ENCODE measurements at regions of chr6 and their contacts with region 1.

Region 1: GRCh38 chr6:125956506-125957390 is at the start of gene HINT3:
- DNase-seq: peak; percentile 92 to 99
- H3K4me3 ChIP-seq: peak within 1 kb of the TSS; percentile 47 to 94 (median 90)
- H3K27ac ChIP-seq: peak within 1 kb of the TSS; percentile 12; the same call in 1 of the 2 replicates
- H3K4me1 ChIP-seq: peaks cover 0 to 9% (median 5%) of the 10 kb centered on the region in 4 experiments; a peak in 4 of 7 replicates
- H3K27me3 ChIP-seq: no peaks in the 10 kb centered on the region
- CTCF ChIP-seq: peak; percentile 86 to 99 (median 95)
- EP300 ChIP-seq: peak in 1 of 2 experiments; percentile 79; a peak in 1 of 3 replicates
- POLR2A ChIP-seq: no peak; a peak in 1 of 3 replicates
- RAD21 ChIP-seq: peak; percentile 74 to 75
- total RNA-seq, gene HINT3: 7.7 and 7.8 TPM in 2 replicates

Region 2: GRCh38 chr6:125406741-125407140 is 550.0 kb before region 1 on chr6:
- CTCF ChIA-PET with region 1: no interaction called
- POLR2A ChIA-PET with region 1: no interaction called
- DNase-seq: no peak
- H3K4me3 ChIP-seq: no peak overlapping the region
- H3K27ac ChIP-seq: no peak overlapping the region
- H3K4me1 ChIP-seq: no peaks in the 10 kb centered on the region
- H3K27me3 ChIP-seq: no peaks in the 10 kb centered on the region
- CTCF ChIP-seq: no peak
- EP300 ChIP-seq: no peak
- POLR2A ChIP-seq: no peak
- RAD21 ChIP-seq: no peak

Region 3: GRCh38 chr6:125688138-125688537 is 268.6 kb before region 1 on chr6:
- CTCF ChIA-PET with region 1: no interaction called
- POLR2A ChIA-PET with region 1: no interaction called
- DNase-seq: no peak
- H3K4me3 ChIP-seq: no peak overlapping the region
- H3K27ac ChIP-seq: no peak overlapping the region
- H3K4me1 ChIP-seq: no peaks in the 10 kb centered on the region
- H3K27me3 ChIP-seq: no peaks in the 10 kb centered on the region
- CTCF ChIP-seq: no peak
- EP300 ChIP-seq: no peak
- POLR2A ChIP-seq: no peak
- RAD21 ChIP-seq: no peak

Region 4: DNA sequence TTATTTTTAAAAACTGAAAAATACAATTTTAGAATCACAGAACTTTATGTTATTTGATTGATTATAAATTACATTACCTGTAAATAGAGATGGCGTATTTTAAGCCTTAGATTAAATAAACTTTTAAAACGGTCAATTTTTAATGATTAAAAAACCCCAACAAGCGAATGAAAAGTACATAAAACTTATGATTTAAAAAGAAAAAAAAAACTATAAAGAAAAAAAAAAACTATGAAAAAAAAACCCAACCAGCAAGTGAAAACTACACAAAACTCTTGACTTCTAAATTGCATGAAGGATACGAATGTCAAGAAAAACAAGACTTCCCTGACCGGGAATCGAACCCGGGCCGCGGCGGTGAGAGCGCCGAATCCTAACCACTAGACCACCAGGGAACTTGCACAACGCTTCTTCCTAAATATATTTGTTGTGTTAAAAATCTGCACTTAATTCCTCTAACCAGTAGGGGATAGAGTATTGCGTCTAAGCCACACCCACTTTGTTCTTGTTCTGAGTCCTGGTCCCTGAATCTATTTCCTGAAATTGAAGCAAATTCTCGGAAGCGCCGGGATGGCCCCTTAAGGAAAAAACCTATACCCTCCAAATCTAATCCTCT is 176.7 kb before region 1 on chr6:
- CTCF ChIA-PET with region 1: interaction called, 13 read pairs
- POLR2A ChIA-PET with region 1: interaction called, 4 read pairs
- DNase-seq: peak in 1 of 2 experiments; percentile 94
- H3K4me3 ChIP-seq: peak overlapping the region; percentile 78 to 97 (median 87)
- H3K27ac ChIP-seq: no peak overlapping the region
- H3K4me1 ChIP-seq: no peaks in the 10 kb centered on the region; a peak in 1 of 7 replicates
- H3K27me3 ChIP-seq: no peaks in the 10 kb centered on the region
- CTCF ChIP-seq: peak in 2 of 3 experiments; percentile 5 to 11; a peak in 1 of 4 replicates
- EP300 ChIP-seq: peak in 1 of 2 experiments; percentile 25; a peak in 1 of 3 replicates
- POLR2A ChIP-seq: no peak; a peak in 1 of 3 replicates
- RAD21 ChIP-seq: no peak

Region 5: DNA sequence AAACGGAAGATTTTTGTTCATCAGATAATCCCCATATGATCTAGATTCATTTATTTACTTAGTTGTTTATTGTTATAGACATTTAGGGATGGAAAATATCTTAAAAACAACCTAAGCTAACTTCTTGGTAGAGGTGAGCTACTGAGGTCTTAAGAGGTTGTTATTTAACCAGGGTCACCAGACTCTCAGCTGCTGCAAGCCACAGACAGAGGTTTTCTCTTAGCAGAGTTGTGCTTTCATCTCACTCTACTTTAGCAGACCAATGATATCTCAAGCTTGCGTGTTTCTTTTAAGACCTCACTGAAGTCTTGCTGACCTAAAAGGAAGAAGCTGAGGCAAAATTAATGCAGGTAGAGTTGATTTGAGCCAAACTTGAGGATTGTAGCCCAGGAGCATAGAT is 122.4 kb before region 1 on chr6:
- CTCF ChIA-PET with region 1: interaction called, 11 read pairs
- POLR2A ChIA-PET with region 1: no interaction called
- DNase-seq: no peak
- H3K4me3 ChIP-seq: no peak overlapping the region
- H3K27ac ChIP-seq: no peak overlapping the region
- H3K4me1 ChIP-seq: no peaks in the 10 kb centered on the region
- H3K27me3 ChIP-seq: no peaks in the 10 kb centered on the region
- CTCF ChIP-seq: no peak
- EP300 ChIP-seq: no peak
- POLR2A ChIP-seq: no peak
- RAD21 ChIP-seq: no peak

Region 6: GRCh38 chr6:125888989-125889656 is 67.6 kb before region 1 on chr6:
- CTCF ChIA-PET with region 1: interaction called, 45 read pairs
- POLR2A ChIA-PET with region 1: no interaction called
- DNase-seq: no peak
- H3K4me3 ChIP-seq: no peak overlapping the region
- H3K27ac ChIP-seq: no peak overlapping the region
- H3K4me1 ChIP-seq: no peaks in the 10 kb centered on the region
- H3K27me3 ChIP-seq: no peaks in the 10 kb centered on the region
- CTCF ChIP-seq: peak in 2 of 3 experiments; percentile 63 to 74; a peak in 3 of 4 replicates
- EP300 ChIP-seq: no peak
- POLR2A ChIP-seq: no peak
- RAD21 ChIP-seq: peak; percentile 16 to 36; a peak in 3 of 4 replicates

Region 7: GRCh38 chr6:125906158-125906998 is 50.4 kb before region 1 on chr6:
- CTCF ChIA-PET with region 1: interaction called, 57 read pairs
- POLR2A ChIA-PET with region 1: no interaction called
- DNase-seq: peak in 1 of 2 experiments; percentile 85
- H3K4me3 ChIP-seq: no peak overlapping the region
- H3K27ac ChIP-seq: no peak overlapping the region
- H3K4me1 ChIP-seq: no peaks in the 10 kb centered on the region; a peak in 1 of 7 replicates
- H3K27me3 ChIP-seq: no peaks in the 10 kb centered on the region
- CTCF ChIP-seq: peak; percentile 78 to 93 (median 86)
- EP300 ChIP-seq: no peak
- POLR2A ChIP-seq: no peak
- RAD21 ChIP-seq: peak; percentile 52 to 60

Region 8: GRCh38 chr6:125944434-125944816 is 12.3 kb before region 1 on chr6:
- CTCF ChIA-PET with region 1: interaction called, 13 read pairs
- POLR2A ChIA-PET with region 1: interaction called, 4 read pairs
- DNase-seq: no peak
- H3K4me3 ChIP-seq: no peak overlapping the region
- H3K27ac ChIP-seq: no peak overlapping the region
- H3K4me1 ChIP-seq: no peaks in the 10 kb centered on the region
- H3K27me3 ChIP-seq: no peaks in the 10 kb centered on the region; a peak in 2 of 7 replicates
- CTCF ChIP-seq: no peak
- EP300 ChIP-seq: no peak
- POLR2A ChIP-seq: no peak
- RAD21 ChIP-seq: no peak

Measured in H1 (cell line).